Activated CD8-positive, alpha-beta memory T cell treated with anti-CD3 and anti-CD28 coated beads, Interleukin-2, amount 10 ng/mL, durations not matched to agents 7 days and 5 days (primary cell): ENCODE measurements at regions of chr6 and their contacts with region 1.

Region 1: DNA sequence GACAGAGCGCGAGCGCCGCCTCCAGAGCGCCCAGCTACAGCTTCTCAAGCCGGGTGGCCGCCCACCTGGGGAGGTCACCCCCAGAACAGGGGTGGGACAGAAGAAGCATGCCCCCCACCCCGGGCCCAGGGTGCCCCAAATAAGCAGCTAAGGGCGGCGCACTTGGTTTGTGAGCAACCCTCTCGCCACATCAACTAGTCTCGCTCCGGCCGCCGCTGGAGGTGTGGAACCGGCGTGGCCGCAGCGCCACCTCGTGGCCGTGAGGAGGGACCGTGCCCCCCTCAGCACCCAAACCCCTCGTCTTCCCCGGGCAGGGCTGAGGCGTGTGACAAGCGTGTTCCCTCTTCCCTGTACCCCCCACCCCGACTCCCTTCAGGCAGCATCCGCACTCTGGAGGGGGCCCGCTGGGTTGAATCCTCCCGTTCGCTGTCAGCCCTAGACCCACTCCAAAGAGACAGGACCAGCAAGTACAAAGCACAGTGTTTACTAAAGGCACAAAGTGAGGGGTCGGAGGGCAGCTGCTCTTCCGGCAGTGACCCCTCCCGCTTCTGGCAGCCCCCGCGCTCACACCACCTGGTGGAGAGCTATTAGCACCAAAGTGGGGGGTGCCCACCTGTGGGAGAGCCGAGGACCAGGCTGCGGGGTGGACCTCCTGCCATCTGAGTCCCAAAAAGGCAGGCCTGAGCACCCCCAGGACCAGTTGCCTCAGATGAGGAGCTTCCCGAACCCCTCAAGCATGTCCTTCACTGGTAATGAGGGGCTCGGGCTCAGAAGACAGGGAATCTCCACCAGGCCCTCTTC is 45.4 kb downstream of the MDFI start:
- DNase-seq: peak; percentile 82
- ATAC-seq: peak; percentile 95
- H3K4me3 Mint-ChIP-seq: peak overlapping the region; percentile 46
- H3K27ac Mint-ChIP-seq: peak overlapping the region; percentile 68
- H3K4me1 Mint-ChIP-seq: peaks cover 6% of the 10 kb centered on the region
- H3K27me3 Mint-ChIP-seq: peaks cover 4% of the 10 kb centered on the region

Region 2: GRCh38 chr6:41424370-41425058 is 259.2 kb before region 1 on chr6:
- CTCF ChIA-PET with region 1: interaction called, 11 read pairs
- DNase-seq: peak; percentile 85
- ATAC-seq: peak; percentile 59
- H3K4me3 Mint-ChIP-seq: no peak overlapping the region
- H3K27ac Mint-ChIP-seq: no peak overlapping the region
- H3K4me1 Mint-ChIP-seq: peaks cover 2% of the 10 kb centered on the region
- H3K27me3 Mint-ChIP-seq: peaks cover 44% of the 10 kb centered on the region

Region 3: GRCh38 chr6:41602864-41603608 is 80.7 kb before region 1 on chr6:
- CTCF ChIA-PET with region 1: interaction called, 53 read pairs
- DNase-seq: peak; percentile 85
- ATAC-seq: peak; percentile 88
- H3K4me3 Mint-ChIP-seq: no peak overlapping the region
- H3K27ac Mint-ChIP-seq: no peak overlapping the region
- H3K4me1 Mint-ChIP-seq: peaks cover 3% of the 10 kb centered on the region
- H3K27me3 Mint-ChIP-seq: peaks cover 11% of the 10 kb centered on the region

Region 4: GRCh38 chr6:41694815-41695526 is 11.3 kb after region 1 on chr6:
- CTCF ChIA-PET with region 1: interaction called, 10 read pairs
- DNase-seq: no peak
- ATAC-seq: no peak
- H3K4me3 Mint-ChIP-seq: no peak overlapping the region
- H3K27ac Mint-ChIP-seq: no peak overlapping the region
- H3K4me1 Mint-ChIP-seq: no peaks in the 10 kb centered on the region
- H3K27me3 Mint-ChIP-seq: no peaks in the 10 kb centered on the region

Region 5: DNA sequence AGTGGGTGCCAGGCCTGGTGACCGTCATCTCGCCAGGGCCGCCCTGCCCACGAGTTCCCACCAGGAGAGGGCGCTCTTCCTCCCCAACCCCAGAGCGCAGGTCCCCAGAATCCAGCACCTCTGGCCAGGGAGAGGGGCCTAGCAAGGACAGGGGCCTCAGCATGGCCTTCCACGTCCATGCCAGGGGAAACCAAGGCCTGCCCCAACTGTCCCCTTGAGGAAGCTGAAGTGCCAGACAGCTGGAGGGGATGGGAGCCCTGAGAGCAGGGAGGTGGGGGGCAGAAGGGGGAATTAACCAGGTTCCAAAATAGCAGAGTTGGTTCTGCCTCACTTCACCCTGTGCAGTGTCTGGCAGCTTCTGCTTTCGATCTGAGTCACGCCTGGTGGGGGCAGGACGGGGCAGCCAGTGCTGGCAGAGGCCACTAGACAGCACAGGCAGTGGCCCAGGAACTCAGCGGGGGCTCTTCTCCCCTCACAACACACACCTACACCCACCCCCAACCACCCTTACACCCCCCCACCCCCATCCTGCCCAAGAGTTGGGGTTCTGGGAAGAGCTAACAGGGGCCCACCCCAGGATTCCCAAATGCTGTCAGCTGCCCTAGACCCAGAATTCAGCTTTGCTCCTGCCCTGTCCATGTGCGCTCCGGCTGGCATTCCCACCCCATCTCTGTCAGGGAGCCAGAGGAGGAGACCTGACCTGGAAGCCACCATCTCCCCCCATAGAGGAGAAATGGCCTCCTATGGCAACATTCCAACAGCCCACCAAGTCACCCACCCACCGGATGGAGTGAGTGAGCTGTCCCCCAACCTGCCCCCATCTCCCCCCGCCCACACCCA is 22.5 kb after region 1 on chr6:
- CTCF ChIA-PET with region 1: interaction called, 10 read pairs
- DNase-seq: peak; percentile 85
- ATAC-seq: peak; percentile 92
- H3K4me3 Mint-ChIP-seq: no peak overlapping the region
- H3K27ac Mint-ChIP-seq: peak overlapping the region; percentile 67
- H3K4me1 Mint-ChIP-seq: peaks cover 33% of the 10 kb centered on the region
- H3K27me3 Mint-ChIP-seq: no peaks in the 10 kb centered on the region

Region 6: GRCh38 chr6:42175860-42176259 is 492.1 kb after region 1 on chr6:
- CTCF ChIA-PET with region 1: no interaction called
- DNase-seq: no peak
- ATAC-seq: no peak
- H3K4me3 Mint-ChIP-seq: no peak overlapping the region
- H3K27ac Mint-ChIP-seq: no peak overlapping the region
- H3K4me1 Mint-ChIP-seq: no peaks in the 10 kb centered on the region
- H3K27me3 Mint-ChIP-seq: peaks cover 3% of the 10 kb centered on the region